ENCODE measurements at regions of chr19 and their contacts with region 1.

Region 1: GRCh38 chr19:34120846-34121639 is 51.3 kb upstream of the LSM14A start:
- DNase-seq: no peak
- ATAC-seq: peak; percentile 74
- H3K4me3 ChIP-seq: no peak overlapping the region
- H3K27ac ChIP-seq: no peak overlapping the region
- H3K4me1 ChIP-seq: no peaks in the 10 kb centered on the region
- H3K27me3 ChIP-seq: no peaks in the 10 kb centered on the region; a peak in 1 of 4 replicates
- CTCF ChIP-seq: peak; percentile 72 to 79 (median 78)
- EP300 ChIP-seq: no peak
- POLR2A ChIP-seq: no peak
- RAD21 ChIP-seq: peak; percentile 63

Region 2: DNA sequence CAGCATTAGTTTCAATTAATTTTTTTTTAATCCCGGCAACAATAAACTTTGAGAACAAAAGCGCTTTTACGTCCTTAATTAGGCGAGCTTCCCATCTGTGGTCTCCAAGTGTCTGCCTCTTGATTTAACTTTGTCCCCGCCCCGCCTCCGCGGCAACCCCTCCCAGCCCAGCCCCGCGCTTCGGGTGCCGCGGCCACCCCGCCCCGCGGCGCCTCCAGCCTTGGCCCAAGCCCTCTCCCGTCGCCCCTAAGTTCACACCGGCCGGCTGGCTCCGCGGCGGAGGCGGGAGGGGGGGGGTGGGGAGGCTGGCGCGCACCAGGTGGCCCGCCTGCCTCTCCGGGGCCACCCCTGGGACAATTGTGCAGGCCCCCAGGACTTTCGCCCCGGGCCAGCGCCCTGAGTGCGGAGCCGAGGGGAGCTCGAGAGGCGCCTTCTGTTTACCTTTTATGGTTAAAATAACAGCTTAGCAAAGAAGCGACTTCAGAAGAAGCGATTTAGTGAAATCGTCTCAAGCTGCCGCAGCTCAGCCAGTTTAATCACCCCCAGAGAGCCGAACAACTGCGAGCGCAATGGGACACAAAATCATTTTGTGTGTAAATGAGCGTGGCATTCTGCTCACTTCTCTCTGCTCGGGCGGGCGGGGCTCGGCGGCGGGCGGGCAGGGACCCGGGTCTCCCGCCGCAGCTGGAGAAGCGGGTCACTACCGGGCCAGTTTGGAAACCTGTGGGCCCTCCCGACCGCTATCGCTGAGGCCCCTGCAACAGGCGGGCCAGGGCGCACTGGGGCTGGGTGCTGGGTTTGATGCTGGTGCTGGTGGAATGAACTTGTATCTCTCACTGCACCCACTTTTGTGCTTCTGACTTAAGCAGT is 323.0 kb before region 1 on chr19:
- CTCF ChIA-PET with region 1: no interaction called
- POLR2A ChIA-PET with region 1: no interaction called
- RAD21 ChIA-PET with region 1: no interaction called
- SMC1A ChIA-PET with region 1: no interaction called
- in situ Hi-C with region 1: no loop called
- intact Hi-C with region 1: no loop called
- DNase-seq: no peak
- ATAC-seq: no peak
- H3K4me3 ChIP-seq: no peak overlapping the region
- H3K27ac ChIP-seq: no peak overlapping the region
- H3K4me1 ChIP-seq: no peaks in the 10 kb centered on the region
- H3K27me3 ChIP-seq: peaks cover 3 to 5% of the 10 kb centered on the region in 2 experiments
- CTCF ChIP-seq: no peak
- EP300 ChIP-seq: no peak
- POLR2A ChIP-seq: no peak
- RAD21 ChIP-seq: no peak

Region 3: GRCh38 chr19:34051255-34051654 is 69.8 kb before region 1 on chr19:
- CTCF ChIA-PET with region 1: no interaction called
- POLR2A ChIA-PET with region 1: no interaction called
- RAD21 ChIA-PET with region 1: no interaction called
- SMC1A ChIA-PET with region 1: no interaction called
- in situ Hi-C with region 1: no loop called
- intact Hi-C with region 1: no loop called
- DNase-seq: no peak
- ATAC-seq: no peak
- H3K4me3 ChIP-seq: no peak overlapping the region
- H3K27ac ChIP-seq: no peak overlapping the region
- H3K4me1 ChIP-seq: no peaks in the 10 kb centered on the region
- H3K27me3 ChIP-seq: no peaks in the 10 kb centered on the region
- CTCF ChIP-seq: no peak
- EP300 ChIP-seq: no peak
- POLR2A ChIP-seq: no peak
- RAD21 ChIP-seq: no peak

Region 4: GRCh38 chr19:34082289-34083077 is 38.6 kb before region 1 on chr19:
- CTCF ChIA-PET with region 1: no interaction called
- POLR2A ChIA-PET with region 1: no interaction called
- RAD21 ChIA-PET with region 1: no interaction called
- SMC1A ChIA-PET with region 1: no interaction called
- in situ Hi-C with region 1: no loop called
- intact Hi-C with region 1: no loop called
- DNase-seq: no peak
- ATAC-seq: no peak
- H3K4me3 ChIP-seq: no peak overlapping the region
- H3K27ac ChIP-seq: no peak overlapping the region
- H3K4me1 ChIP-seq: no peaks in the 10 kb centered on the region
- H3K27me3 ChIP-seq: no peaks in the 10 kb centered on the region
- CTCF ChIP-seq: no peak
- EP300 ChIP-seq: no peak
- POLR2A ChIP-seq: no peak
- RAD21 ChIP-seq: no peak

Region 5: GRCh38 chr19:34145741-34146202 is 24.7 kb after region 1 on chr19:
- CTCF ChIA-PET with region 1: interaction called, 20 read pairs
- POLR2A ChIA-PET with region 1: no interaction called
- RAD21 ChIA-PET with region 1: interaction called, 4 read pairs
- SMC1A ChIA-PET with region 1: interaction called, 14 read pairs
- in situ Hi-C with region 1: no loop called
- intact Hi-C with region 1: loop called (anchors 1 kb)
- DNase-seq: no peak
- ATAC-seq: peak; percentile 82
- H3K4me3 ChIP-seq: no peak overlapping the region
- H3K27ac ChIP-seq: no peak overlapping the region
- H3K4me1 ChIP-seq: no peaks in the 10 kb centered on the region
- H3K27me3 ChIP-seq: no peaks in the 10 kb centered on the region; a peak in 1 of 4 replicates
- CTCF ChIP-seq: peak; percentile 62 to 90 (median 83)
- EP300 ChIP-seq: no peak
- POLR2A ChIP-seq: no peak
- RAD21 ChIP-seq: peak; percentile 85